ENCODE measurements at regions of chr6 and their contacts with region 1.

Region 1: DNA sequence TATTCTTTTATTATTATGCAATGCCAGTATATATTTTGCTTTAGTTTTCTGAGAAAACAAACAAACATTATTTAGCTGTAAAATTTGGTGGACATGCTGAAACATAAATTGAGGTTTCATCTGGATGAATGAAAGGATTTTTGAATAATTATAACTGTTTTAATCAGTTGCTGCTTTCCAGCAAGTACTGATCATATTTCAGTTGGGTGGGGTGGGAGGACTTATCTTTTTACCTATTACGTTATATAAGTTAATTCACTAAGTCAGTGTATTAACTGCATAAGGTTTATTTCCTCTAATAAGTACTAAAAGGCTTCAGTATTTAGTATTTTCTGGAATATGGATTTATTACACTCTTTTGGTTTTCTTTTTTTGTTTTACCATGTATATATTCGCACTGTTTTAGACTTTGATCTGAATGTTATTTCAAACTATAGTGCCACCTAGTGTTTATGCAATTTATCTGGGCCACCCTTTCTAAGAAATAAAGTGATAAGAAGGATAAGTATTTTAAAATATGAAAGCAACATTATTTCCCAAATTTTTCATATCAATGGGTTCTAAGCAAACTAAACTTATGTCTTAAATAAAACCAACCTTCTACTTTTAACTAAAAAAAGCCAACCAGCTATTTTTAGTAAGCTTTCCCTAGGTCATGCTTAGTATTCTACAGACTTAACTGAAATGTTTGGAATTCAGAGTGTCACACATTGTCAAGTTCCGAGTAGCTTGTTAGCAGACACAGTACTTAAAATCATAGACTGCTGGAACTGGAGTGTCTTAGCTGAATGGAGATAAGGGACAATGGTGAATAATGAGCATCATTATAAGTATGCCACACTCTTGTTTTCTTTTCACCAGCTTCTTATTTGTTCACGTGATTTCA is 105.4 kb upstream of the MCHR2 start:
- DNase-seq: no peak
- H3K4me3 ChIP-seq: no peak overlapping the region
- H3K27ac ChIP-seq: no peak overlapping the region
- H3K4me1 ChIP-seq: no peaks in the 10 kb centered on the region
- H3K27me3 ChIP-seq: no peaks in the 10 kb centered on the region
- CTCF ChIP-seq: peak in 2 of 3 experiments; percentile 18 to 29; a peak in 2 of 4 replicates
- EP300 ChIP-seq: no peak
- POLR2A ChIP-seq: no peak
- RAD21 ChIP-seq: peak in 1 of 2 experiments; percentile 44; a peak in 3 of 4 replicates

Region 2: GRCh38 chr6:100078509-100078908 is 20.9 kb before region 1 on chr6:
- CTCF ChIA-PET with region 1: interaction called, 10 read pairs
- POLR2A ChIA-PET with region 1: no interaction called
- DNase-seq: peak; percentile 19 to 51
- H3K4me3 ChIP-seq: no peak overlapping the region
- H3K27ac ChIP-seq: no peak overlapping the region
- H3K4me1 ChIP-seq: no peaks in the 10 kb centered on the region
- H3K27me3 ChIP-seq: no peaks in the 10 kb centered on the region
- CTCF ChIP-seq: peak; percentile 62 to 79 (median 70)
- EP300 ChIP-seq: no peak
- POLR2A ChIP-seq: no peak
- RAD21 ChIP-seq: peak; percentile 64 to 70

Measured in H1 (cell line).